ENCODE measurements at regions of chr12 and their contacts with region 1.

Region 1: DNA sequence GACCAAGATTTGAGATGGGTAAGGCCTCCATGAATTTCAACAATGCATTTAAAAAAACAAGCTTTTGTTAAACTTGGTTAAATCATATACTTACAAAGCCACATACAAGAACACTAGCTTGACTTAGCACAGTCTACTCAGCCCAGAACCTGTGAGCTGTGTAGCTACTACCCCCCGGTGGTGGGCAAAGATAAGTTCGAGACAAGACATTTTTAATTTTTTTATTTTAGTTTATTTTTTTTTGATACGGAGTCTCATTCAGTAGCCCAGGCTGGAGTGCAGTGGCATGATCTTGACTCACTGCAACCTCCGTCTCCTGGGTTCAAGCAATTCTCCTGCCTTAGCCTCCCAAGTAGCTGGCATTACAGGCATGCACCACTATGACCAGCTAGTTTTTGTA is 3.7 kb upstream of the NECAP1 start:
- DNase-seq: peak; percentile 79
- H3K4me3 Mint-ChIP-seq: peak overlapping the region; percentile 25
- H3K27ac Mint-ChIP-seq: peak overlapping the region; percentile 26
- H3K4me1 Mint-ChIP-seq: peaks cover 41% of the 10 kb centered on the region
- H3K27me3 Mint-ChIP-seq: no peaks in the 10 kb centered on the region

Region 2: GRCh38 chr12:7188562-7189397 is 889.6 kb before region 1 on chr12:
- CTCF ChIA-PET with region 1: no interaction called
- intact Hi-C with region 1: loop called (anchors 5 kb)
- DNase-seq: peak; percentile 87
- H3K4me3 Mint-ChIP-seq: peak overlapping the region; percentile 88
- H3K27ac Mint-ChIP-seq: peak overlapping the region; percentile 95
- H3K4me1 Mint-ChIP-seq: peaks cover 36% of the 10 kb centered on the region
- H3K27me3 Mint-ChIP-seq: no peaks in the 10 kb centered on the region

Region 3: DNA sequence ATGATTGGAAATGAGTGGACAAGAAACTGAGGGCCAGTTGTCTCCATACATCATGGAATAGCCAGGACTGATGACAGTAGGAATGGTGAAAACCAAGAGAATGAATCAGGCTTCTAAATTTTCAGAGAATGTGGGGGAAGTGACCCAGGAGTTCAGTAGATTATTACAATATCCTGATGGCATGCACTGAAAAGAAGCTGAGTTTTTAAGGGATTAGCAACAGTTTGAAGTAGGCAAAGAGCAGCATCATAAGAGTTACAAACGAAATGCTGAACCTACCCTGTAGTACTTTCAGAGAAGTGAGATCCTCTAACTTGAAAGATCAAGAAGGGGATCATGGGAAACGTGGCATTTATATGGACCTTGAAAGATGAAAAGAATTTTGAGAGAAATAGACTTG is 218.8 kb before region 1 on chr12:
- CTCF ChIA-PET with region 1: interaction called, 11 read pairs
- intact Hi-C with region 1: loop called (anchors 1 kb)
- DNase-seq: no peak
- H3K4me3 Mint-ChIP-seq: no peak overlapping the region
- H3K27ac Mint-ChIP-seq: no peak overlapping the region
- H3K4me1 Mint-ChIP-seq: peaks cover 11% of the 10 kb centered on the region
- H3K27me3 Mint-ChIP-seq: no peaks in the 10 kb centered on the region

Region 4: GRCh38 chr12:7970475-7971252 is 107.7 kb before region 1 on chr12:
- CTCF ChIA-PET with region 1: interaction called, 3 read pairs
- intact Hi-C with region 1: loop called (anchors 1 kb)
- DNase-seq: peak; percentile 92
- H3K4me3 Mint-ChIP-seq: peak overlapping the region; percentile 79
- H3K27ac Mint-ChIP-seq: peak overlapping the region; percentile 97
- H3K4me1 Mint-ChIP-seq: peaks cover 32% of the 10 kb centered on the region
- H3K27me3 Mint-ChIP-seq: no peaks in the 10 kb centered on the region

Region 5: DNA sequence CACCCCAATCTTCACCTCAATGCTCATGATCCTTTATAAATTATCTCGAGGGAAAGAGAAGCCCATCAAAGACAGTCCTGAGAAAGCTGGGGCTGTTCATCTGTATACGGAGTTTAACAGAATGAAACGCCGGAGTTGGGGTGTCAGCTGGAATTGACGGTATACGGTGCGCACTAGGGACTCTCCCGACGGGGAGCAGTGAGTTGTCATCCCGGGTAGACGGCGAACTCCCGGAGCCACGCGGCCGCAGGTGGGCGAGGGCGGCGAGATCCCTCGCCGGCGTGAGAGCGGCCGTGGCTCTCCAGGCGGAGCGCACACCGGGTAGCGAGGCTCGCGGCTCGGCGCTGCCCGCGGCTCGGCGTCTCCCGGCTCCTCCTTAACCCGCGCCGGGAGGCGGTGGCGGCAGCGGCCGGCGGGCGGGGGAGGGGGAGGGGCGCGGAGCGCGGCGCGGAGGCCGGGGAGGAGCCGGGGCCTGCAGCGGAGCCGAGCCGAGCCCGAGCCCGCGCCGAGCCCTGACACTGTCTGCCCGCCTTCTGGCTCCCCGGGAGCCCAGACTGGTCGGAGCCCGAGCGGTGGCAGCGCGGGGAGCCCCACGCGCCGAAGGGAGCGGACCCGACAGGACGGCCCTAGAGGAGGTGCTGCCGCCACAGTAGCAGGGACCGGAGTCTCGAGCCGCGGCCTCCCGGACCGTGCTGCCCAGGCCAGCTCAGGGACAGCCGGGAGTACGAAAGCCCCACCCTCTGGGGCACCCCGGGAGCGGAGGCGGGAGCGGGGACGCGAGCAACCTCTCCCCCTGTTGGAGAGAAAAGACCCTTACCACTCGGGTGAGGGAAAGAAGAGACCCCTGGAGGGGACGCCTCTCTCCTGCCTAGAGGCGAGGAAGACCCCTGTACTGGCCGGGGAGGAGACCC is 45.9 kb before region 1 on chr12 and contains the start of gene FOXJ2:
- CTCF ChIA-PET with region 1: interaction called, 17 read pairs
- intact Hi-C with region 1: loop called (anchors 1 kb)
- DNase-seq: peak; percentile 72
- H3K4me3 Mint-ChIP-seq: peak within 1 kb of the TSS; percentile 82
- H3K27ac Mint-ChIP-seq: peak within 1 kb of the TSS; percentile 86
- H3K4me1 Mint-ChIP-seq: peaks cover 51% of the 10 kb centered on the region
- H3K27me3 Mint-ChIP-seq: no peaks in the 10 kb centered on the region
- total RNA-seq, gene FOXJ2: 17.6 to 17.7 TPM

Region 6: DNA sequence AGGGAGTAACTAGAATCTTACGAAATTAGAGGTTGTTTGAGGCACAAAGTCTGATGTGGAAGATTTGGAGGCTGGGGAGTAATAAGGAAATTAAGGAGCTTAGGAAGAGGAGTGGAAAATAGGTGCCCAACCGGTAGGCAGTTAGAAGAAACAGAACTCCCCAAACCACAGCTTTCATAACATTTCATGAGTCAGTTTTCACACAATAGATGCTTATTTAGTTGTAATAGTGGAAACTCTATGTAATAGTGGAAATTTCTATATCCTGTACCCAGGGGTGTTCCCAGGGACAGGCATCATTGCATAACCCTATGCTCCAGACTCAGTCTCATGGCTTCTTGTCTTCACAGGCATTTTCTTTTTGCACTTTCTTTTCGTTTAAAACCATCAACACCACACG is 20.6 kb before region 1 on chr12:
- CTCF ChIA-PET with region 1: interaction called, 15 read pairs
- intact Hi-C with region 1: no loop called
- DNase-seq: no peak
- H3K4me3 Mint-ChIP-seq: no peak overlapping the region
- H3K27ac Mint-ChIP-seq: no peak overlapping the region
- H3K4me1 Mint-ChIP-seq: peaks cover 10% of the 10 kb centered on the region
- H3K27me3 Mint-ChIP-seq: no peaks in the 10 kb centered on the region